Heart right ventricle (tissue), 16 donors: ENCODE measurements at regions of chr16 and their contacts with region 1.

Region 1: GRCh38 chr16:74623214-74623842 is 16.4 kb upstream of the GLG1 start:
- DNase-seq: no peak
- ATAC-seq: peak in 7 of 8 donors; percentile 36 to 65 (median 54)
- H3K4me3 ChIP-seq: no peak overlapping the region
- H3K27ac ChIP-seq: no peak overlapping the region
- H3K4me1 ChIP-seq: peaks cover 0 to 18% (median 4%) of the 10 kb centered on the region in 9 donors
- H3K27me3 ChIP-seq: no peaks in the 10 kb centered on the region
- CTCF ChIP-seq: peak; percentile 47 to 79 (median 68)

Region 2: DNA sequence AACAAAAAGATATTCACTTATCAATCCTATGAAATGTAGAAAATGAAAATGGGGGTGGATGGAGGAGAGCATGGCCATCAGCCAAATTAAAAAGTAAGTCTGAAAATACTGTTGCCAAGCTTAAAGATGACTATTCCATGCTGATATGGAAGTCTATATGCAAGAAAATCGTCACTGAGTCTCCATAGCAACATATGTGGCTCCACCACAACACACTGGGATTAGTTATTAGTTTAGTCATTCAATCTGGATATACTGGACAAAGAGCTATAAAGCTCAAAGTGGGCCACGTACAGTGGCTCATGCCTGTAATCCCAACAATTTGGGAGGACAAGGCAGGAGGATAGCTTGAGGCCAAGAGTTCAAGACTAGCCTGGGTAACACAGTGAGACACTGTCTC is 351.5 kb before region 1 on chr16:
- intact Hi-C with region 1: no loop called
- DNase-seq: no peak
- ATAC-seq: no peak
- H3K4me3 ChIP-seq: no peak overlapping the region
- H3K27ac ChIP-seq: no peak overlapping the region
- H3K4me1 ChIP-seq: no peaks in the 10 kb centered on the region
- H3K27me3 ChIP-seq: no peaks in the 10 kb centered on the region
- CTCF ChIP-seq: no peak

Region 3: GRCh38 chr16:74480141-74481029 is 142.9 kb before region 1 on chr16:
- intact Hi-C with region 1: loop called in 6 of 10 experiments (anchors 5 to 10 kb)
- DNase-seq: peak in 1 of 2 donors; percentile 35
- ATAC-seq: peak in 6 of 8 donors; percentile 49 to 80 (median 58)
- H3K4me3 ChIP-seq: no peak overlapping the region
- H3K27ac ChIP-seq: peak overlapping the region in 2 of 10 donors; percentile 1 to 45
- H3K4me1 ChIP-seq: peaks cover 0 to 13% (median 6%) of the 10 kb centered on the region in 9 donors
- H3K27me3 ChIP-seq: no peaks in the 10 kb centered on the region
- CTCF ChIP-seq: no peak

Region 4: DNA sequence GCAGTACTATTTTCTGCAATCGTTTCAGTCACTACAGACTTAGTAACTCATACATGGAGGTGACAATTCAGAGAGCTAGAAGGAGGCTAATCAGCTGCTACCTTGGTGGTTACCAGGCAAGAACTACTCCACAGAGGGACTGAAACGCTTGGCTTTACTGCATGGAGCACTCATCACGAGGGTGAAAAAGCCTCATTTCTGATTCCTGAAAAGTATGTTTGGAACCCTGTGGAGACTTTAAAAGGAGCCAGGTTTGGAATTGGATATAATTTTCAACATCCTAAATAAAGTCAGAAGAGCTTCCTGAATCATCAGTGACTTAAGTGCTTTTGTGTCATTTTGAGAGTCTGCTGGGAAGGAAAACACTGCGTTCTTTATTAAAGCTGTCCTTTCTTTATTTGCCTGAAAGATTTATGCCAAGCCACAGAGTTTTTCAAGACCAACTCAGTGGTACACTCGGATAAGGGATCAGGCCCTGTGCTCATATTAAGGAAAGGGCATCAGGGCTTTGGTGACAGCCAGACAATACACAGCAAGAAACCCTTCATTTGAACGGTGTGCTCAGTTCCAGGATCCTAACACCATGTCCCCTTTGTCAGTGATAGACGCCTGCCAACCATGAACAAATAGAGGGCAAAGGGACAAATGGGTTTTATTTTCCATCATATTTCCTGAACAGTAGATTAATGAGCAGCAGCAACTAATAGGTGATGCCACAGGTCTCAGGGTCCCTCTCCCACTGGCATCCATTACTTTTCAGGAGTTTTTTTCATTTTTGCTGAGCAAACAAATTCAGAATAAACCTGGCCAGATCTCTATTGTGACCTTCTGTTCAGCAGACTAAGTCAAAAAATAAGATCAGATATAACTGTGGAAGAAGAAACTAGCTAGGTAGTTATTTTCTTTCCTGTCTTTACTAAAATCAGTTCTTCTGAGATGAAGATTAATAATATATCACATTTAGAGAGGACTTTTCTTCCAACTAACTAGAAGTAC is 121.5 kb before region 1 on chr16:
- intact Hi-C with region 1: loop called in 1 of 10 experiments (anchors 5 kb)
- DNase-seq: peak in 1 of 2 donors; percentile 9
- ATAC-seq: peak in 6 of 8 donors; percentile 73 to 95 (median 92)
- H3K4me3 ChIP-seq: no peak overlapping the region
- H3K27ac ChIP-seq: peak overlapping the region; percentile 33 to 73 (median 57)
- H3K4me1 ChIP-seq: peaks cover 0 to 39% (median 14%) of the 10 kb centered on the region in 9 donors
- H3K27me3 ChIP-seq: no peaks in the 10 kb centered on the region
- CTCF ChIP-seq: no peak

Region 5: GRCh38 chr16:74666425-74667254 is 43.3 kb after region 1 on chr16 and contains the start of gene RFWD3:
- intact Hi-C with region 1: no loop called
- DNase-seq: peak; percentile 91 to 98
- ATAC-seq: peak; percentile 99 to 100 (median 100)
- H3K4me3 ChIP-seq: peak within 1 kb of the TSS; percentile 73 to 99 (median 85)
- H3K27ac ChIP-seq: peak within 1 kb of the TSS in 9 of 10 donors; percentile 10 to 88 (median 75)
- H3K4me1 ChIP-seq: peaks cover 0 to 20% (median 12%) of the 10 kb centered on the region in 9 donors
- H3K27me3 ChIP-seq: no peaks in the 10 kb centered on the region
- CTCF ChIP-seq: no peak
- total RNA-seq, gene RFWD3: 4.6 to 10.2 (median 6.0) TPM

Region 6: DNA sequence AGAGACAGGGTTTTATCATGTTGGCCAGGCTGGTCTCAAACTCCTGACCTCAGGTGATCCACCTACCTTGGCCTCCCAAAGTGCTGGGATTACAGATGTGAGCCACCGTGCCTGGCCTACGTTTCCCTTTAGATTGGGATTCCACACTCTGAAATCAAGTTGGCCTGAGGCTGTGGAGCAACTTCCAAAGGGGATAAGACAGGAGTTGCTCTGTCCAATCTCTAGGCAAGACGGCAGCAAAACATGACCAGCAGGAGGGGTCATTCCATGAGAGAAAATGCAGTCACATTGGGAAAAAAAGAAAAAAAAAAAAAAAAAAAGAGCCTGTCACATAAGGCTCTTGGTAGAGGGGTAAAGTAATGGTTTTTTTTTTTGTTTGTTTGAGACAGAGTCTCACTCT is 60.8 kb after region 1 on chr16:
- intact Hi-C with region 1: no loop called
- DNase-seq: no peak
- ATAC-seq: no peak
- H3K4me3 ChIP-seq: no peak overlapping the region
- H3K27ac ChIP-seq: no peak overlapping the region
- H3K4me1 ChIP-seq: peaks cover 0 to 5% (median 0%) of the 10 kb centered on the region in 9 donors
- H3K27me3 ChIP-seq: no peaks in the 10 kb centered on the region
- CTCF ChIP-seq: no peak